Prostate gland (tissue), 2 donors: ENCODE measurements at regions of chr20 and their contacts with region 1.

Region 1: DNA sequence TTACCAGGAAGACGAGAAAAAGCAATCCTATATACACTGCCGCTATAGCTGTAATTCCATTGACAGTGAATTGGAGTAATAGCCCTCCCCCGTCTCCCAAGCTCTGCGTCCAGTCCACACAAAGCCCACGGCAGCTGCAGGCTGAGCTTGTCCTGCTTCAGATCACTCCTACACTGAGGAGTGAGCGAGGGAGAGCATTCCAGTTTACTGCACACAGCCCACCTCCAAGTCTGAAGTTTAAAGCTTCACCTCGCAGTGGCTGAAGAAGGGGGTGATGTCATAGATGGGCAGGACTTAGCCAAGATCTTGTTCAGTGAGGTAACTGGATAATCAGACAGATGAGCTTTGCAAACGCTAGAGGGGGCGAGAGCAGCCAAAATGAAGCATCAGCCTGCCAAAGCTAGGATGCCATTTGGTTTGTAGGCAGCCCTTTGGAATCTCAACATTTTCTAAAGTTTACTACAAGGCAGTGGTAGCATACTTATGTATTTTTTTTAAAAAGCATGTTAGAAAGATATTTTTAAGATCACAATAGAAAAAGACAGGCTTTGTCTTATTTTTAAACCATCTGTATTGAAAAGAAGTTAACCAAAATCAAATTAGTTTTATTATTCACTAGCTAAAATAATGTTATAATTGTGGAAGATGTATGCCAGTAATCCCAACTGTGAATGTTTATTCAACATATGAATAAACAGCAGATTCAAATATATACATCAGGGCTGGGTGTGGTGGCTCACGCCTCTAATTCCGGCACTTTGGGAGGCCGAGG is at the start of gene FLRT3:
- DNase-seq: peak; percentile 92
- H3K4me3 ChIP-seq: peak within 1 kb of the TSS; percentile 24 to 37
- H3K27ac ChIP-seq: peak within 1 kb of the TSS; percentile 52 to 71
- H3K4me1 ChIP-seq: no peaks in the 10 kb centered on the region
- H3K27me3 ChIP-seq: no peaks in the 10 kb centered on the region
- CTCF ChIP-seq: peak; percentile 37 to 90 (median 75)
- POLR2A ChIP-seq: peak; percentile 98
- total RNA-seq, gene FLRT3: 22.2 to 43.0 TPM

Region 2: GRCh38 chr20:14046534-14046933 is 291.1 kb before region 1 on chr20:
- intact Hi-C with region 1: no loop called
- DNase-seq: no peak
- H3K4me3 ChIP-seq: no peak overlapping the region
- H3K27ac ChIP-seq: no peak overlapping the region
- H3K4me1 ChIP-seq: no peaks in the 10 kb centered on the region
- H3K27me3 ChIP-seq: no peaks in the 10 kb centered on the region
- CTCF ChIP-seq: no peak
- POLR2A ChIP-seq: no peak

Region 3: GRCh38 chr20:14142171-14142570 is 195.4 kb before region 1 on chr20:
- intact Hi-C with region 1: loop called (anchors 10 kb)
- DNase-seq: peak; percentile 41
- H3K4me3 ChIP-seq: no peak overlapping the region
- H3K27ac ChIP-seq: no peak overlapping the region
- H3K4me1 ChIP-seq: no peaks in the 10 kb centered on the region
- H3K27me3 ChIP-seq: no peaks in the 10 kb centered on the region
- CTCF ChIP-seq: peak in 3 of 4 experiments; percentile 44 to 65 (median 61)
- POLR2A ChIP-seq: no peak

Region 4: DNA sequence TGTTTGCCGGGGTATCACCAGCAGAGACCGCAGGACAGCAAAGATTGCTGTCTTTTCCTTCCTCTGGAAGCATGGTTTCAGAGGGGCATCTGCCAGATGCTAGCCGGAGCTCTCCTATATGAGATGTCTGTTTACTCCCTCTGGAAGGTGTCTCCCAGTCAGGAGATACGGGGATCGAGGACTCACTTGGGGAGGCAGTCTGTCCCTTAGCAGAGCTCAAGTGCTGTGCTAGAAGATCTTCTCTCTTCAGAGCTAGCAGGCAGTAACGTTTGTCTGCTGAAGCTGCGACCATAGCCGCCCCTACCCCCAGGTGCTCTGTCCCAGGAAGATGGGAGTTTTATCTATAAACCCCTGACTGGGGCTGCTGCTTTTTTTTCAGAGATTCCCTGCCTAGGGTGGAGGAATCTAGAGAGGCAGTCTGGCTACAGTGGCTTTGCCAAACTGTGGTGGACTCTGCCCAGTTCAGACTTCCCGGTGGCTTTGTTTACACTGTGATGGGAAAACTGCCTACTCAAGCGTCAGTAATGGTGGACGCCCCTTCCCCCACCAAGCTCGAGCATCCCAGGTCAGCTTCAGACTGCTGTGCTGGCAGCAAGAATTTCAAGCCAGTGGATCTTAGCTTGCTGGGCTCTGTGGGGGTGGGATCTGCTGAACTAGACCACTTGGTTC is 132.8 kb after region 1 on chr20:
- intact Hi-C with region 1: no loop called
- DNase-seq: no peak
- H3K4me3 ChIP-seq: no peak overlapping the region
- H3K27ac ChIP-seq: no peak overlapping the region
- H3K4me1 ChIP-seq: no peaks in the 10 kb centered on the region
- H3K27me3 ChIP-seq: no peaks in the 10 kb centered on the region
- CTCF ChIP-seq: no peak
- POLR2A ChIP-seq: no peak

Region 5: DNA sequence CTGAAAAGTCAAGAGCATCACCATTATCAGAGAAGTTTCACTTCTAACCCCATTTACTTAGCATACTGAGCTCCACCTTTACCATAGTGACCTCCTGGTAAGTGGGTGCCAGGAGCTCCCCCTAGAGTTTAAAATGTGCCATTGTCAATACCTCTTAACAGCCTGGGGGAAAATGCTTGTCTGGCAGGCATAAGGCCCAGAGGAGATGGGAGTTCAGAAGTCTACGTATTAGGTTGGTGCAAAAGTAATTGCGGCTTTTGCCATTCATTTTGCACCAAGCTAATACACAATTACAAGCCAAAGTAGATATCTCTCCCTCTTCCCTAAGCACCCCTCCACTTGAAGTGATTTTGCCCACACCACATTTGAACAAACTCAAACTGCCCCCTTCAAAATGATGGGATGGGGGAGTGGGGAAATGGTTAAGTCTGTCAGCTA is 1316.6 kb after region 1 on chr20:
- intact Hi-C with region 1: loop called (anchors 10 kb)
- DNase-seq: peak; percentile 14
- H3K4me3 ChIP-seq: no peak overlapping the region
- H3K27ac ChIP-seq: no peak overlapping the region
- H3K4me1 ChIP-seq: no peaks in the 10 kb centered on the region
- H3K27me3 ChIP-seq: no peaks in the 10 kb centered on the region
- CTCF ChIP-seq: peak in 3 of 4 experiments; percentile 28 to 57 (median 42)
- POLR2A ChIP-seq: no peak

Region 6: GRCh38 chr20:15760001-15760621 is 1422.5 kb after region 1 on chr20:
- intact Hi-C with region 1: loop called (anchors 5 kb)
- DNase-seq: no peak
- H3K4me3 ChIP-seq: no peak overlapping the region
- H3K27ac ChIP-seq: no peak overlapping the region
- H3K4me1 ChIP-seq: no peaks in the 10 kb centered on the region
- H3K27me3 ChIP-seq: no peaks in the 10 kb centered on the region
- CTCF ChIP-seq: no peak
- POLR2A ChIP-seq: no peak

Region 7: DNA sequence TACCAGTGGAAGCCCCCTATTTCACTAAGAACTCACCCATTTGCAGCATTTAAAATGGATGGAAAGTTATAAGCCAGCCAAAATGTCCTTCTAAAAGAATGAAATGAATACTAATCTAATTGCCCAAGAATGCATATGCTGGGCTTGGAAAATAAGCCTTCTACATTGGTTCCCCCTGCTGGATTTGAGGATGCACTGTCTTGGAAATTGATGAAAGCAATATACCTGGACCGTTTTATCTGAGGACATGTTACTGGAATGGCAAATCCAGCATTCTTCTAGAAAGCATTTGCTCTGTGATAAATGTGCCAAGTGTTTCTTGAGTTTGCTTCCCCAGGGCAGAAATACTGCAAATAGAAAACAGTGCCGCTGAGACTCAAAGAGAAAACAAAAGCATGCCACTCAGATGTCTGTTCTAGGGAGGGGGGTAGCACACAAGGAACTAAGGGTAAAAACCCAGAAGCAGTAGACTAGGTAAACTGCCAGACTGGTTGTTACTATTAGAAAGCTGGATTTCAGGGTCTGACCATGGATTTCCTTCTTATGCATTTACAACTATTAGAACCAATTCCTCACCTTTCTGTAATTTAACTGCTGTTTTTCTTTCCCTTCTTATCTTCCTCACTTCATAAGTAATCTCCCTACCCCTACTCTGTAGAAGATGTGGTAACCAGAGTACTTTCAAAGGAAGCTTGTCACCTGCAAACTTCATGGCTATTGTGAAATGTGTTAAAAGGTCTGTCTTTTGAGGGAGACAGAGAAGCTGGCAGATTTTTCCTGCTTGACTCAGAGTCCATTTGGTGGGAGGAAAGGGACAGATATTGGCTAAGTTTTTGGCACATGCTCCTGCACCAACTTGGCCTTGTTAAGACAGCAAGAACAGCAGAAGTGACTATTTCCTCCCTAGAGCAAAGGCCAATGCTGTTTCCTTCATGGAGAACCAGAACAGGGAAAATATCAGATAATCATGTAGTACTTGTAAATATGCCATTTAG is 1593.0 kb after region 1 on chr20:
- intact Hi-C with region 1: loop called (anchors 2 kb)
- DNase-seq: peak; percentile 15
- H3K4me3 ChIP-seq: no peak overlapping the region
- H3K27ac ChIP-seq: no peak overlapping the region
- H3K4me1 ChIP-seq: no peaks in the 10 kb centered on the region
- H3K27me3 ChIP-seq: no peaks in the 10 kb centered on the region
- CTCF ChIP-seq: peak in 3 of 4 experiments; percentile 32 to 62 (median 54)
- POLR2A ChIP-seq: no peak